Activated CD4-positive, alpha-beta memory T cell treated with anti-CD3 and anti-CD28 coated beads for 36 hours (primary cell): ENCODE measurements at regions of chrX and their contacts with region 1.

Region 1: GRCh38 chrX:154019633-154020528 is at the start of gene IRAK1:
- DNase-seq: peak; percentile 65
- H3K4me3 Mint-ChIP-seq: peak within 1 kb of the TSS; percentile 89
- H3K27ac Mint-ChIP-seq: peak within 1 kb of the TSS; percentile 94
- H3K4me1 Mint-ChIP-seq: peaks cover 20% of the 10 kb centered on the region
- H3K27me3 Mint-ChIP-seq: no peaks in the 10 kb centered on the region
- total RNA-seq, gene IRAK1: 99.6 to 106 TPM

Region 2: GRCh38 chrX:153981771-153982533 is 37.9 kb before region 1 on chrX:
- CTCF ChIA-PET with region 1: no interaction called
- POLR2A ChIA-PET with region 1: interaction called, 7 read pairs
- intact Hi-C with region 1: loop called (anchors 5 kb)
- DNase-seq: peak; percentile 86
- H3K4me3 Mint-ChIP-seq: peak overlapping the region; percentile 62
- H3K27ac Mint-ChIP-seq: peak overlapping the region; percentile 94
- H3K4me1 Mint-ChIP-seq: peaks cover 46% of the 10 kb centered on the region
- H3K27me3 Mint-ChIP-seq: no peaks in the 10 kb centered on the region

Region 3: DNA sequence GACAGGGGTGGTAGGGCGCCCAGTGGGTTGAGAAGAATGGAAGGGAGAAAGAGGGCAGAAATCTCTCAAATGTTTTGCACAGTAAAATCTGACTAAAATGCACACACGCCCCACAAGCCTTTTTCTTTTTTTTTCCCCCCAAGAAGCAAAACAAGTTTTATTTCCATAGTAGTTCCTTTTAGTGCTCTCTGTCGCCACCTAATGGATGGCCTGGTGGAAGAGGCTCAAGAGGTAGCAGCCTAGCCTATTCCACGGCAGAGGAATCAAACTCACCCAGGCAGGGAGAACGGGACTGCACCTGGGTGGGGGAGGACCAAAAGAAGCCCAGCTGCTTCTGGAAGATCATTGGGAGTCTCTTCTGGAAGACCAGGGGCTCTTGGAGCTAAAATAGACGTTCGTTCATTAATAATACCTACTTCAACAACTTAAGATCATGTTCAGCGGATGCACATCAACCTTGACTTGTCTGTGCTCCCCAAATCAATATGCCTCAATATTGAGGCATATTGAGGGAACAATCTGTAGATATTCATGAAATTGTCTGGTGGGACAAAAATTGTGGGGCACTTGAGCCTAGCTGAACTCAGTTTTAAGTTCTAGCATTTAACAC is 31.4 kb after region 1 on chrX:
- CTCF ChIA-PET with region 1: no interaction called
- POLR2A ChIA-PET with region 1: no interaction called
- intact Hi-C with region 1: loop called (anchors 2 kb)
- DNase-seq: peak; percentile 71
- H3K4me3 Mint-ChIP-seq: no peak overlapping the region
- H3K27ac Mint-ChIP-seq: peak overlapping the region; percentile 62
- H3K4me1 Mint-ChIP-seq: peaks cover 37% of the 10 kb centered on the region
- H3K27me3 Mint-ChIP-seq: no peaks in the 10 kb centered on the region

Region 4: GRCh38 chrX:154091678-154092077 is 71.8 kb after region 1 on chrX:
- CTCF ChIA-PET with region 1: no interaction called
- POLR2A ChIA-PET with region 1: interaction called, 3 read pairs
- intact Hi-C with region 1: loop called (anchors 5 kb)
- DNase-seq: no peak
- H3K4me3 Mint-ChIP-seq: no peak overlapping the region
- H3K27ac Mint-ChIP-seq: peak overlapping the region; percentile 62
- H3K4me1 Mint-ChIP-seq: peaks cover 65% of the 10 kb centered on the region
- H3K27me3 Mint-ChIP-seq: no peaks in the 10 kb centered on the region